Posterior vena cava (tissue), 2 donors: ENCODE measurements at regions of chr12 and their contacts with region 1.

Region 1: GRCh38 chr12:108040947-108041346 is 88.1 kb upstream of the WSCD2 start:
- DNase-seq: no peak

Region 2: DNA sequence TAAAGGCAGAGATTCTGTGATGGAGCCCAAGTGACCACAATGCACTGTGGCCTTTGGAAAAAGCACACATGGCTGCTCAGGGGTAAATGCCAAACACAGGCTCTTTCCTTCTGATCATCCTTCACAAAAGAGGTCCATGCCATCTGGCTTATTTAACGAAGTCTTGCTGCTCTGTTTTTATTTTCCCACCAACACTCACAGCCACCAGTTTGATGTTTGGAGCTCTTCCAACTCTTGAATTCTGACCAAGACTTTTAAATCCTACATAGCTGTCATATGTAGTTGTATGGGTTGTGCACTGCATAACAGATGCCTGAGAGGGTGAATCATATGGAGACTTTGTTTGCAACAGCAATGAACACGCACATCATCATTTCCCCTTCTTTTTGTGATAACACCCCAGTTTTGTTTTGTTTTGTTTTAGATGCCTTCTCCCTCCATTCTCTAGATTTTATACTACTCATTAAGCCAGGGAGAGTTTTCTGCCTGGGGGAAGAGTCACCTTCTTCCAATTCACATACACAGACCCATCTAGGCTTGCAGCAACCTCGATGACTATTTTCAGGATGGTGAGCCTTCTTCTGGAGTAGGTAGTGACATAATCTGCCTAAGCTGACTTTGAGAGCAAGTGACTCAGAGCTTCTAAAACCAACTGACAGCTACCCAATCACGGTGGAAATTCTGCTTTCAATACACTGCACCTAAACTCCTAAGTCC is 57.0 kb before region 1 on chr12:
- intact Hi-C with region 1: no loop called
- DNase-seq: no peak

Region 3: DNA sequence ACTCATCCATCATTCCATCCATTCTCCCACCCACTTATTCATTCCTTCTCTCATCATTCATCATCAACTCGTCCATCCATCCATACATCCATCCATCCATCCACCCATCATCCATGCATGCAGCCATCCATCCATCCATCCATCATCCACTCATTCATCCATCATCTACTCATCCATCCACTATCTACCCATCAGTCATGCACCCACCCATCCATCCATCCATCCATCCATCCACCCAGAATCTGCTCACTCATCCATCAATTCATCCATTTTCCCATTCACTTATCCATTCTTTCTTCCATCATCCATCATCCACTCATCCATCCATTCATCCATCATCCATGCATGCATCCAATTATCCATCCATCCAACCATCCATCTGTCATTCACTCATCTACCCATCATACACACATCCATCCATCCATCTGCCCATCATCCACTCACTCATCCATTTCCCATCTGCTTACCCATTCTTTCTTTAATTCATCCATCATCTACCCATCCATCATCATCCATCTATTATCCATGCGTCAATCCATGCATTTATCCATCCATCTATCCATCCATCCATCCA is 18.9 kb before region 1 on chr12:
- intact Hi-C with region 1: loop called in 1 of 2 experiments (anchors 1 kb)
- DNase-seq: no peak

Region 4: DNA sequence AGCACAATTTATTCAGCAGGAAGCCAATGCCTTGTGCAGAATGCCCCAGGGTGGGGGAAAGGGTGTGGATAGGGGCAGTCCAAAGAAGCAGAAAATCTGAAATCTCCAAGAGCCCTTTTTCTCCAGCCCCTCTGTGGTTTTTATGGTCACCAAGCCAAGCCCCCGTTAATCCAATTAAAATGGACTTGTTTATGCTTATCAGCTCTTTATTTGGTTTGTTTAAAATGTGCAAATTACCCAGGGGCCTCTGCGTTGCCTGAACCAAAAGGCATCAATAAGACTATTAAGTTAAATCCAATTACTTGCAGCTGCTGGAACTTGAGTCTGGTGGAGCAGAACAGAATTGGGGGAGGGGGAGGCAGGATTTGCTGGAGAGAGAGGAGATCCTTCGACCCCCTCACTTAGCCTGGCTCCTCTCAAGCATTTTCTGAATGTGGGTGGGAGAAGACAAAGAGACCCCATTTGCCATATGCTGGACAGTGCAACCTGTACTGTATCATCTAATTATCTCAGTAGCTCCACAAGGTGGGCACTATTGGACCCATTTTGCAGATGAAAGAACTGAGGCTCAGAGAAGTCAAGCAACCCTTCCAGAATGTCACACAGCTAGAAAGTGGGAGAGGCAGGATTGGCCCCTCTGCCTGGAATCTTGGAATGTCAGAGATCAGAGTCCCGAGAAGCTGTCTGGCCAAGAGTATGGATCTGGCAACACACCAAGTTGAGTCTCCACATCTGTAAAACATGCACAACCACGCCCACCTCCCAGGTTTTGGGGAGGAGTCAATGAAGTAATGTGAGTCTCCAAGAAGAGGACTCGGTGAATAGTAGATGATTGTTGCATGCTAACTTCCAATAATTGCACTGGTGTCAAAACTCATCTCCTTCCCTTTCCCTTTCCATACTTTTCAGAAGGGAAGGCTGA is 231.3 kb after region 1 on chr12:
- intact Hi-C with region 1: no loop called
- DNase-seq: no peak

Region 5: DNA sequence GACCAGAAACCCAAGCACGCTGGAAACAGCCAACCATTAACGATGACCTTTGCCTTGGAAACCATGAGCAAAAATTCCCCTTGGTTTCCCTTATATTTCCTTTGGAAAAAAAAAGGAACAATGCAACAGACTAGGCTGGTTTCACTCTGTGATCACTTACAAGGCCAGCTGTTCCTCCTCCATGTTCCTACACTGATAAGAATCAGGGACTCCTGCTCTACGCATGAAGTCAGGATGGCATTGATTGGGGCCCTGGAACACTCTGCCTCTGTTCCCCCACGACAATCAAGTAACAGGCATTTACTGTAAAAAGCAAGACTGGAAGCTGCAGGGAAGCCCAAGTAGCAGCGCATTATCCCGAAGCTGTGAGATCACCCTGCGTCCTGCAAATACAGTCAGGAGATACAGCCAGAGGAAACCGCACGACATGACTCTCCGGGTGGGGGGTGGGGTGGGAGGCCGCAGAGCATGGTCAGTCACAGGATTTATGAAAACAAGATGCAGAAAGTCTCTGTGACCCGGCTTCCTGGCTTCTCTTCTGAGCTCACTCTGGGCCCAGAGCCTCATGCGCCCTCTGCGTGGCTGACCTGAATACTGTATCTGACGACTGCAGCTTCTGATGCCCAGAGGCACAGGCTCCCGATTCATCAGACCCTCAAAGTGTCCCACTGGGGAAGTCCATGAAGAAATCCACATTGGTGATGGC is 785.3 kb after region 1 on chr12:
- intact Hi-C with region 1: no loop called
- DNase-seq: peak; percentile 93